Astrocyte of the cerebellum (primary cell): ENCODE measurements at regions of chr1 and their contacts with region 1.

Region 1: GRCh38 chr1:202009326-202010179 is 834 bp upstream of the ELF3 start:
- DNase-seq: peak; percentile 59
- H3K4me3 ChIP-seq: no peak overlapping the region
- CTCF ChIP-seq: peak; percentile 87

Region 2: DNA sequence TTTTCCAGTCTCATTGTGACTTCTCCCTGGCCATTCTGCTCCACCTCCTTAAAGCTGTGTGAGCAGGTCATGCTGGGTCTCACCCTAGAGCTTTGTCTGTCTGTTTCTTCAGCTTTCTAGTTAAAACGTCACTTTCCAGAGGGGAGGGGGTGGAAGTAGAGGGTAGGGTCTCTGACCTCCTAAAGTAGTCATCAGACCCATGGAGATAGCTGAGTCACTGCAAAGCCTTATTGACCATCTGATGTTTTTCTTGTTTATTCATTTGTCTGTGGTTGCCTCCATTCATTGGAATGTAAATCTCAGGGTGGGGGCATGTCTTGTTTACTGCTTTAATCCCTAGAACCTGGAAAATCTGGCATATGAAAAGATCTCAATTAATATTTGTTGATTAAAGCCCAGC is 53.5 kb after region 1 on chr1:
- in situ Hi-C with region 1: no loop called
- DNase-seq: no peak
- H3K4me3 ChIP-seq: no peak overlapping the region
- CTCF ChIP-seq: no peak

Region 3: DNA sequence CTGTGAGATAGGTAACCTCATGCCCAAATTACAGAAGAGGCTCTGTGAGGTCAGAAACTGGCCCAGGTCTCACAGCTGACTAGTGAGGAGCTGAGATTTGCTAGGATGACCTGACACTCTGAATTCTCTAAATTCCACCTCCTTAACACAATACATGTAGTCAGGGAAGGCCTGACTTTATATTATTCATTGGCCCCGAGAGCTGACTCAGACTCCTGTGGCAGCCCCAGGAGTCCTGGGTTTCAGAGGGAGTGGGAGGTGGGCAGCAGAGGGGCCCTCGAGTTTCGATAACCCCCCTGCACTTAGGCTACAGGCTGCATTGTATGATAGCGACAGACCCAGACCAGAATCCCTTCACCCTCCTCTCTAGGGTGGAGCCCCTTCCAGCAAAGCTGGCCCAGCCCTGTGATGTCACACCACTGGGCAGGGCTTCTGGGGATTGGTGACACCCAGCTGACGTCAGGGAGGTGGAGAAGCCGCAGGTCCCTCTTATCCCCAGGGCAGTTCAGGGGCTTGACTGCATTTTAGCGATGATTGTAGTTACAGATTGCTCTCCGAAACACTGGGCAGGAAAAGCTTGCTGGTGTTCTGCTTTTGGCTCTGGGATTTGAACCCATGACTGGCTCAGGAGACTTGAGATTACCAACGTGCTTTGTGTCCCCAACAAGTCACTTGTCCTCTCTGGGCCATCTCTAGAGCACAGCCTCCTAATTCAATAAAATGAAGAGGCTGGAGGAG is 96.2 kb after region 1 on chr1:
- in situ Hi-C with region 1: loop called (anchors 10 kb)
- DNase-seq: no peak
- H3K4me3 ChIP-seq: no peak overlapping the region
- CTCF ChIP-seq: no peak

Region 4: GRCh38 chr1:202122639-202123335 is 113.2 kb after region 1 on chr1 and contains the start of gene GPR37L1:
- in situ Hi-C with region 1: no loop called
- DNase-seq: no peak
- H3K4me3 ChIP-seq: no peak within 1 kb of the TSS
- CTCF ChIP-seq: peak; percentile 52